ENCODE measurements at regions of chr7 and their contacts with region 1.

Region 1: DNA sequence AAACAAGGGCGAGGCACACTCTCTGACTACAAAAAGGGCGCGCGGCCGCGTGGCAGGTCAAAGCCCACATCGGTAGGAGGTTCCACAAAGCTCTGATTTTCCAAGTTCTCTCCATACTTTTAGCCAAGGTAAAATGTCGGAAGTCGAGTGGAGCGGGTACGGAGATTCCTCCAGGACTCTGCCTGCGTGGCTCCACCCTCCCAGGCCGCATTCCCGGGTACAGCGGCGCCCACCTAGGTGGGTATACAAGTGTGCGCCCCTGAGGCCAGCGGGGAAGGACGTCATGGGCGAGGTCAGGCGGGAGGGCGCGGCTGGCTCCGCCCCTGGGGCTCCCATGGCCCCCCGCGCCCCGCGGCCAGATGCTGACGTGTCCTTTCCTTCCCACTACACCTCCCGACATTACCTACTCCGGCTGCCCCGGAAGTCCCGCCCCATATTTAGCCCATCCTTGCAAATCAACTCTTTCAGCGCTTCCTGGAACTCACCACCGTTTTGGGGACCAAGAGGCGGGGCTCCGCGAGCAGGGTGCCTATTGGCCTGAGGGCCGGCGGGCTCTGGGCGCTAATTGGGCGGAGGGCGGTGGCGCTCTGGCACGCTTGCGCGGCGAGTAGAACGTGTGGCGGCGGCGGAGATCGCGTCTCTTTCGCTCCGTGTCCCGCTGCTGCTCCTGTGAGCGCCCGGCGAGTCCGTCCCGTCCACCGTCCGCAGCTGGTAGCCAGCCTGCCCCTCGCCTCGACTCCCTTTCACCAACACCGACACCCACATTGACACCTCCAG is at the start of gene SND1:
- DNase-seq: peak; percentile 99
- H3K4me3 Mint-ChIP-seq: peak within 1 kb of the TSS; percentile 99
- H3K27ac Mint-ChIP-seq: peak within 1 kb of the TSS; percentile 91
- H3K4me1 Mint-ChIP-seq: peaks cover 33% of the 10 kb centered on the region
- H3K27me3 Mint-ChIP-seq: no peaks in the 10 kb centered on the region
- total RNA-seq, gene SND1: 184 to 211 TPM

Region 2: DNA sequence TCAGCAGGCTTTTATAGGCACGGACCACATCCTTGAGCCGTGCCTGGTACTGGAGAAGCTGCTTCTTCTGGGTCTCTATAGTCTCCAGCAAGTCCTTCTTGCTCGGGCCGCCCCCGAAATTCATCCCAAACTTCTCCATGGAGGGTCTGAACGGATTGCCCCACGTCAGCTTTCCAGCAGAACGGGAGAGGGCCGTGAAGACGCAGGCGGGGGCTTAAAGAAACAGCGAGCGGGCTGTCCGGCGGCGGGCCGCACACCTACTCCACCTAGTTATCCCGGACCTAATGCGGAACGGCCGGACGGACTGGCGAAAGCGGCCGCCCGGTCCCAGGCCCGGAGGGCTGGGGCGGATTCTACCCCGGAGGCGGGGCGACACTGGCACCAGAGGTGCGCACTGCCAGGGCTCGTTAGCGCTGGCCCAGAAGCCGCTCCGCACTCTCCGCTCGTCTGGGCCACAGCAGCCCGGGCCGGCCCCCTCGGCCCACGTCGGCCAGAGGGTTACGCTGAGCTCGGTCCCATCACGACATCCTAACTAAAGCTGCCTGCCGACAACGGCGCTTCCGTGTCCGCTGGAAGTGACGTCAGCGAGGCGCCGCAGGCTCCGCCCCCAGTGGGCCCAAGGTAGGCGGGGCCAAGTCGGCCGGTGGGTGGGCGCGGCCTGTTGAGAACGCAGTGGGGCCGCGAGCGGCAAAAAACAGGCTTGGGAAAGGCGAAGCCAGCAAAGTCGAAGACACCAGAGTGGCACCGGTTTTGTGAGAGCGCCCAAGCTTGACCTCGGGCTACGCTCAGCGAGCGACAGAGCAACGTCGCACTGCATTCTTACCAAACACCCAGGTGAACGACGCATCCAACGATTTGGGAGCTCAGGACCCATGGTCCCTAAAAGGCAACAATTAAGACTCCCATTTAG is 66.4 kb before region 1 on chr7 and contains the start of gene GCC1:
- CTCF ChIA-PET with region 1: interaction called, 4 read pairs
- intact Hi-C with region 1: loop called (anchors 1 kb)
- DNase-seq: peak; percentile 94
- H3K4me3 Mint-ChIP-seq: peak within 1 kb of the TSS; percentile 89
- H3K27ac Mint-ChIP-seq: peak within 1 kb of the TSS; percentile 70
- H3K4me1 Mint-ChIP-seq: peaks cover 66% of the 10 kb centered on the region
- H3K27me3 Mint-ChIP-seq: no peaks in the 10 kb centered on the region
- total RNA-seq, gene GCC1: 11.0 to 12.0 TPM

Region 3: GRCh38 chr7:127745445-127745844 is 93.7 kb after region 1 on chr7:
- CTCF ChIA-PET with region 1: no interaction called
- intact Hi-C with region 1: loop called (anchors 2 kb)
- DNase-seq: peak; percentile 27
- H3K4me3 Mint-ChIP-seq: no peak overlapping the region
- H3K27ac Mint-ChIP-seq: peak overlapping the region; percentile 19
- H3K4me1 Mint-ChIP-seq: peaks cover 51% of the 10 kb centered on the region
- H3K27me3 Mint-ChIP-seq: no peaks in the 10 kb centered on the region

Region 4: GRCh38 chr7:127897704-127898454 is 246.1 kb after region 1 on chr7:
- CTCF ChIA-PET with region 1: no interaction called
- intact Hi-C with region 1: loop called (anchors 1 kb)
- DNase-seq: peak; percentile 58
- H3K4me3 Mint-ChIP-seq: no peak overlapping the region
- H3K27ac Mint-ChIP-seq: no peak overlapping the region
- H3K4me1 Mint-ChIP-seq: peaks cover 15% of the 10 kb centered on the region
- H3K27me3 Mint-ChIP-seq: no peaks in the 10 kb centered on the region

Region 5: GRCh38 chr7:128108641-128109423 is 457.1 kb after region 1 on chr7:
- CTCF ChIA-PET with region 1: no interaction called
- intact Hi-C with region 1: loop called (anchors 5 kb)
- DNase-seq: peak; percentile 45
- H3K4me3 Mint-ChIP-seq: no peak overlapping the region
- H3K27ac Mint-ChIP-seq: peak overlapping the region; percentile 62
- H3K4me1 Mint-ChIP-seq: peaks cover 66% of the 10 kb centered on the region
- H3K27me3 Mint-ChIP-seq: peaks cover under 1% of the 10 kb centered on the region

Region 6: GRCh38 chr7:128739048-128739962 is 1087.6 kb after region 1 on chr7 and contains the start of gene CALU:
- CTCF ChIA-PET with region 1: no interaction called
- intact Hi-C with region 1: loop called (anchors 1 kb)
- DNase-seq: peak; percentile 97
- H3K4me3 Mint-ChIP-seq: peak within 1 kb of the TSS; percentile 99
- H3K27ac Mint-ChIP-seq: peak within 1 kb of the TSS; percentile 96
- H3K4me1 Mint-ChIP-seq: peaks cover 43% of the 10 kb centered on the region
- H3K27me3 Mint-ChIP-seq: no peaks in the 10 kb centered on the region
- total RNA-seq, gene CALU: 33.0 to 35.4 TPM